H1 (cell line): ENCODE measurements at regions of chr11 and their contacts with region 1.

Region 1: GRCh38 chr11:83819933-83820549 is 533.9 kb upstream of the CCDC90B start:
- DNase-seq: no peak
- H3K4me3 ChIP-seq: no peak overlapping the region
- H3K27ac ChIP-seq: no peak overlapping the region
- H3K4me1 ChIP-seq: no peaks in the 10 kb centered on the region
- H3K27me3 ChIP-seq: no peaks in the 10 kb centered on the region
- CTCF ChIP-seq: peak in 2 of 3 experiments; percentile 35 to 40; a peak in 2 of 4 replicates
- EP300 ChIP-seq: no peak
- POLR2A ChIP-seq: no peak
- RAD21 ChIP-seq: peak; percentile 77 to 82

Region 2: DNA sequence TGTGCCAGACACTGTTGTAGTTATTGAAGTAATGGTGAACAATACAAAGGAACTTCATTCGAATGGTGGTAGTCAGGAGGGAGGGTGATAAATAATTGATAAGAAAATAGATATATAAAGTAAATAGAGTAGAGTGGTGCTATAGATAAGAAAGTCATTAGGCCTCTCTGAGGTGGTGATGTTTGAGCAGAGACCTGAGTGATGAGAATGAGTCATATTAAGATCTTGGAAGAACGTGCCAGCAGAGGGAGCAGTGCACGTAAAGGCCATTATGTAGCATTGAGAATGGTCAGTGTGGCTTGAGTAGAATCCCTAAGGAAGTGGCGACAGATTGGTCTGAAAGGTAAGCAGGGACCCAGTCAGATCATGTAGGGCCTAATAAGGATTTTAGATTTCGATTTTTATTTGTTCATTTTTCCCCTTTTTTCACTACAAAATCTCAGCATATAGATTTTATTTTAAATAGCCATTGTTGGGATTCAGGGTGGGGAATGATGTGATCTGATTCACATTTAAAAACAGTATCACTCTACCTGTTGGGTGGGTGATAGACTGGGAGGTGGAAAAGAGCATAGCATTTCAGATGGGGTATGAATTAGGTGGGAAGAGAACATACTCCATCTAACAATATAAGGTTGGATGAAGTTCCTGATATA is 578.6 kb before region 1 on chr11:
- CTCF ChIA-PET with region 1: interaction called, 45 read pairs
- POLR2A ChIA-PET with region 1: no interaction called
- DNase-seq: peak in 1 of 2 experiments; percentile 50
- H3K4me3 ChIP-seq: no peak overlapping the region
- H3K27ac ChIP-seq: no peak overlapping the region
- H3K4me1 ChIP-seq: no peaks in the 10 kb centered on the region
- H3K27me3 ChIP-seq: no peaks in the 10 kb centered on the region
- CTCF ChIP-seq: peak; percentile 2 to 80 (median 61)
- EP300 ChIP-seq: no peak
- POLR2A ChIP-seq: no peak
- RAD21 ChIP-seq: peak; percentile 62 to 66

Region 3: DNA sequence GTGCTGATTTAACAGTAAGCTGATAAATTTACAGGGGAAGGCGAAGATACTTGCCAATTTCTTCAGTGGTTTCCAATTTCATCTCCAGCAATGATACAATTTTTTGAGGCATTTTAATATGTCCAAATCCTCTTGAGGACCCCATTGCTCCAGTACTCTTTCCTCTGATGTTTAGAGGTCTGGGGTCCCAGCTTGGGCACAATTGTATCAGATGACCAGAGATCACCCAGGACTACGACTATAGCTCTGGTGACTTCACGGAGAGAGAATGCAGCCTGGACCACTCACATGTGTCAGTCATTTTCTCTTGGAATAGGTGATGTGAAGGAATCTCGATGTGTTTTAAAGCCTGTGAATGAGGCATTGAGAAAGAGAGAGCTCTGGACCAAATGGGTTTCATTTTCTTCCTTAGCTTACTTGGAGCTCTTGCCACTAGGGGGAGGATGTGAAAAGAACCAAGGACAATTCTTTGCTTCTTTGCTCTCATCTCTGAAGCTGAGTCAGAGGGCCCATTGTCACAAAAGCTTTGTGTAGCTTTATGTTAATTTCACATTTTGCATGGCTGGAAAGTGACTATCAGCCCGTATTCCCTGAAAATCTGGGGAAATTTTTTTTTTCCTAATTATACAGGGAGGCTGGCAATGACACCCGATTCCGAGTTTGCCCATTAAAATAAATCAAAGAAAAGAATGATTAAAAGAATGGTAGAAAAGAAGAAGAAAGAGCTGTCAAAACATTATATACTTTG is 527.2 kb before region 1 on chr11:
- CTCF ChIA-PET with region 1: interaction called, 69 read pairs
- POLR2A ChIA-PET with region 1: no interaction called
- DNase-seq: peak in 1 of 2 experiments; percentile 31
- H3K4me3 ChIP-seq: no peak overlapping the region
- H3K27ac ChIP-seq: no peak overlapping the region
- H3K4me1 ChIP-seq: peaks cover 0 to 5% (median 2%) of the 10 kb centered on the region in 4 experiments; a peak in 2 of 7 replicates
- H3K27me3 ChIP-seq: no peaks in the 10 kb centered on the region
- CTCF ChIP-seq: peak in 2 of 3 experiments; percentile 60 to 83; a peak in 3 of 4 replicates
- EP300 ChIP-seq: no peak
- POLR2A ChIP-seq: no peak
- RAD21 ChIP-seq: peak; percentile 75 to 78

Region 4: DNA sequence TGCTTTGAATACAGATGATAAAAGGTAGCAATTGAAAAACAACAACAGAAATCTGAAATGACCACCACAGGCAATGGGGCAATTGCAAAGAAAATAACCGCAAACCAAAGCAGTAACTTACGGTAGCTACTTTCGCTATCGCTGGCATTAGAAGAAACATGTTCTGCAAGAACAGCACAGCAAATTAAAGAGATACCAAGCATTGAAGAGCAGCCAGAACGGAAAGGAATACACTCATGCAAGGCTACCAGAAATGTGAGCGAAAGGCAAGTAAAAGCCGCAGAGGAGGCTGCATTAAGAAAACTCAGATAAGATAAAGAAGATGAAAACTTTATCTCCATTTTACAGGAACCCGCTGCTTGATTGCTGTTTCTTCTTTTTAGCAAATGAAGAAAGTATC is 339.8 kb before region 1 on chr11:
- CTCF ChIA-PET with region 1: no interaction called
- POLR2A ChIA-PET with region 1: no interaction called
- DNase-seq: no peak
- H3K4me3 ChIP-seq: no peak overlapping the region
- H3K27ac ChIP-seq: no peak overlapping the region
- H3K4me1 ChIP-seq: peaks cover 0 to 7% (median 0%) of the 10 kb centered on the region in 4 experiments; a peak in 4 of 7 replicates
- H3K27me3 ChIP-seq: no peaks in the 10 kb centered on the region
- CTCF ChIP-seq: no peak
- EP300 ChIP-seq: no peak
- POLR2A ChIP-seq: no peak
- RAD21 ChIP-seq: no peak

Region 5: DNA sequence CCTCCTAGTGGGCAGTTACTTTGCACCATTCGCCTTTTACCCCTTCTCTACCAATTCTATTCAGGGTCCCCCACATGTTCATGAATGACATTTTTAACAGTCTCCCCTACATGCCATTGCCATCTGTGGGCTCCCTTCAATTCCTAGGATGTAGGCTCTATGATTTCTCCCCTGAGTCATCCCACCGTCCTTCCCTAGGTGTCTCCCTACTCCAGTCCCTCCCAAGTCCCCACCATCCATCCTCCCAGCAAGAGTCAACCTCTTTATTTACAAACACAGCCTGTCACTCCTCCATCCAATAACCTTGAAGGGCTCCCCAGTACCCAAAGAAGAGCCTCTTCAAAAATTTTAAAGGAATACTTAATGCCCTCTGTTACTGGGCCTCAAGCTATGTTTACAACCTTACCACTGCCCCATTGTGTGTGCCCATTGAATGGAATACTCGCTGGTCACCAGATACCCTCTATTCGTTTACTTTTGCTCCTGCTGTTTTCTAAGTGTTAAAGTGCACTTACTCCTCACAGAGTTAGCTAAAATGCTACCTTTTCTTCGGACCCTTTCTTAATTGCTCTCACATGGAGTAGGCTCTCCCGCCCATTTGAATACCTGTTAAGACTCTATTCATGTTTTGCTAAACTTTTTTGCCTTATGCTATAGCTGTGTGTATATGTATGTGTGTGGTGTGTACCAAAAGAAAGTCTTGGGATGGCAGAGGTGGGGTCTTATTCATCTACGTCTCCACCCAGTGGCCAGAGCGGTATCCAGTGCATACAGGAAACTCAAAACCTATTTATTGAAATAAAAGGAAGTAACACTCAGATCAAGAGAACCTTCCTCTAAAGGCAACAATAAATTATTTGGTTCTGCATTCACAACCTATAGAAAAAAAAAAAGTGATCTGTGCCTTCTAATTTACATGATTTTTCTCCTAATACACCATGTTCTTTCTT is 298.1 kb before region 1 on chr11:
- CTCF ChIA-PET with region 1: interaction called, 24 read pairs
- POLR2A ChIA-PET with region 1: no interaction called
- DNase-seq: no peak
- H3K4me3 ChIP-seq: no peak overlapping the region
- H3K27ac ChIP-seq: no peak overlapping the region
- H3K4me1 ChIP-seq: peaks cover 0 to 5% (median 0%) of the 10 kb centered on the region in 4 experiments; a peak in 2 of 7 replicates
- H3K27me3 ChIP-seq: no peaks in the 10 kb centered on the region
- CTCF ChIP-seq: peak; percentile 61 to 74 (median 62)
- EP300 ChIP-seq: no peak
- POLR2A ChIP-seq: no peak
- RAD21 ChIP-seq: peak; percentile 82 to 83

Region 6: GRCh38 chr11:83724008-83724461 is 96.0 kb before region 1 on chr11:
- CTCF ChIA-PET with region 1: interaction called, 20 read pairs
- POLR2A ChIA-PET with region 1: no interaction called
- DNase-seq: no peak
- H3K4me3 ChIP-seq: peak overlapping the region in 3 of 4 experiments; percentile 3 to 51 (median 32); a peak in 4 of 8 replicates
- H3K27ac ChIP-seq: peak overlapping the region; percentile 57; the same call in 1 of the 2 replicates
- H3K4me1 ChIP-seq: peaks cover 8 to 22% (median 16%) of the 10 kb centered on the region in 4 experiments; a peak in 6 of 7 replicates
- H3K27me3 ChIP-seq: no peaks in the 10 kb centered on the region; a peak in 1 of 7 replicates
- CTCF ChIP-seq: peak in 2 of 3 experiments; percentile 10 to 34; a peak in 2 of 4 replicates
- EP300 ChIP-seq: no peak
- POLR2A ChIP-seq: no peak
- RAD21 ChIP-seq: peak; percentile 51

Region 7: DNA sequence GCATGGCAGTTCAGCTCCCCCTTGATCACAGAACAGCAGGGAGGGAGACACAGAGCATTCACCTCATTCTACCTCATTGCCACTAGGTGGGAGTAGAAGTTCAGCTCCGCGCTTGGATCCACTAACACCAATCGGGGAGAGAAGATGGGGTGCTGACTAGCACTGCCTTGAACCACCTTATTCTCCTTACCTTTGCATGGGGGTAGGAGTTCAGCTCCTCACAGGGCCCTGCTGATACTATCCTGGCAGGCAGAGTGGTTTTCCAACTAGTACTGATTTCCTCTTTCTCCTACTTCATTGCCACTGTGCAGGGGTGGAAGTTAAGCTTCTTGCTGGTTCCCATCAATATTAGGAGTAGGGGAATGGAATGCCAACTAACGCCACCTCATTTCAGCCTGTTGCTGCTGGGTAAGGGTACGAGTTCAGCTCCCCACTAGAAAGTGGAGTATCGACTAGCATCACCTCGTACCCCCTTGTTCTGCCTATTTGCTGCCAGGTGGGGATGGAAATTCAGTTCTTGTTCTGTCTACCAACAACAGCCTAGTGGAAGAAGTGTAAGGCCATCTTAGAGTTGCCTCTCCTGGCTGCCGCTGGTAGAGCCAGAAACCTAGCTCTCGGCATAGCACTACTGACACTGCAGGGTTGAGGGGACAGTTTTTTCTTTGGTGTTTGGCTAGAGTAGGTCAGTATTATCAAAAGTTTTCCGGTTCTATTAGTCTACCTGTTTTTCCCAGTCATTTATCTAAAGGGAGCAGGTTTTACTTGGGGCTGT is 17.0 kb after region 1 on chr11:
- CTCF ChIA-PET with region 1: interaction called, 32 read pairs
- POLR2A ChIA-PET with region 1: no interaction called
- DNase-seq: peak; percentile 17 to 61
- H3K4me3 ChIP-seq: no peak overlapping the region
- H3K27ac ChIP-seq: no peak overlapping the region
- H3K4me1 ChIP-seq: peaks cover 0 to 3% (median under 1%) of the 10 kb centered on the region in 4 experiments; a peak in 2 of 7 replicates
- H3K27me3 ChIP-seq: no peaks in the 10 kb centered on the region
- CTCF ChIP-seq: peak; percentile 75 to 92 (median 86)
- EP300 ChIP-seq: no peak
- POLR2A ChIP-seq: no peak
- RAD21 ChIP-seq: peak; percentile 97